ENCODE measurements at regions of chr11 and their contacts with region 1.

Region 1: DNA sequence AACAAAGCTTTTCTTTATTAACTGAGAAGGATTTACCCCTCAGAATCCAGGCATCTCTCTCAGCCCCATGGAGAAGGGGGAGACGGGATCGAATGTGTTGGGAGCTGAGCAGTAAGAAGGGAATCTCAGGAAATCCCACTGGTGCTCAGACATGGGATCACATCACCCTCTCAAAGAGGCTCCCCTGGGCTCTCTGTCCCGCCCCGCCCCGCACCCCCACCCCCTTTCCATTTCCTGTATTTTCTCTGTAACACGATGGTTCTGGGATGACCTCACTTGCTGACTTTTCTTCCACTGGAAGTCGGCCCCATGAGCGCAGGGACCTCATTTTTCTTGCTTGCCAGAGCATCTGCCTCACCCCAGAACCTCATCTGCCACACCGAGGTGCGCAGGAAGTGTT is 100.0 kb downstream of the RPS6KA4 start:
- DNase-seq: no peak
- H3K4me3 ChIP-seq: no peak overlapping the region
- H3K27ac ChIP-seq: no peak overlapping the region
- H3K4me1 ChIP-seq: no peaks in the 10 kb centered on the region
- H3K27me3 ChIP-seq: peaks cover 3% of the 10 kb centered on the region
- CTCF ChIP-seq: no peak

Region 2: DNA sequence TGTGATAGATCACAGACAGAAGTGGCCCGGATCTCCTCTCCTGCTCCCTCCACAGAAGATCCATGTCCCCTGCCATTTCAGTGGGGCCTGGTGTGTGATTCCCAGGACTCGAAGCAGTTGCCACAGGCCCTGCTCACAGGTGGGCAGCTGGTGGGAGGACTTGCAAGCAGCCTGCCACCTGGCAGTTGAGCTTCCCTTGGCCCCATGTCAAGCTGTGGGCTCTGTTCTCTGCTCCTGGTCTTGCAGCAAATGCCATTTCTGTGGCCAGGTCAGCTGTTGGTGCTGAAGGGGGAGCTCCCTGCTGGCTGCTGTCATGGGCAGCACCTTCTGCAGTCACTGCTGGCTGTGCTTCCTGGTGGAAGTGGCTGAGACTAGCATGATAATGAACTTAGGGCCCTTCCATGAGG is 72.9 kb after region 1 on chr11:
- dilution Hi-C with region 1: loop called (anchors 5 kb)
- DNase-seq: no peak
- H3K4me3 ChIP-seq: no peak overlapping the region
- H3K27ac ChIP-seq: no peak overlapping the region
- H3K4me1 ChIP-seq: no peaks in the 10 kb centered on the region
- H3K27me3 ChIP-seq: peaks cover 35% of the 10 kb centered on the region
- CTCF ChIP-seq: no peak

Region 3: DNA sequence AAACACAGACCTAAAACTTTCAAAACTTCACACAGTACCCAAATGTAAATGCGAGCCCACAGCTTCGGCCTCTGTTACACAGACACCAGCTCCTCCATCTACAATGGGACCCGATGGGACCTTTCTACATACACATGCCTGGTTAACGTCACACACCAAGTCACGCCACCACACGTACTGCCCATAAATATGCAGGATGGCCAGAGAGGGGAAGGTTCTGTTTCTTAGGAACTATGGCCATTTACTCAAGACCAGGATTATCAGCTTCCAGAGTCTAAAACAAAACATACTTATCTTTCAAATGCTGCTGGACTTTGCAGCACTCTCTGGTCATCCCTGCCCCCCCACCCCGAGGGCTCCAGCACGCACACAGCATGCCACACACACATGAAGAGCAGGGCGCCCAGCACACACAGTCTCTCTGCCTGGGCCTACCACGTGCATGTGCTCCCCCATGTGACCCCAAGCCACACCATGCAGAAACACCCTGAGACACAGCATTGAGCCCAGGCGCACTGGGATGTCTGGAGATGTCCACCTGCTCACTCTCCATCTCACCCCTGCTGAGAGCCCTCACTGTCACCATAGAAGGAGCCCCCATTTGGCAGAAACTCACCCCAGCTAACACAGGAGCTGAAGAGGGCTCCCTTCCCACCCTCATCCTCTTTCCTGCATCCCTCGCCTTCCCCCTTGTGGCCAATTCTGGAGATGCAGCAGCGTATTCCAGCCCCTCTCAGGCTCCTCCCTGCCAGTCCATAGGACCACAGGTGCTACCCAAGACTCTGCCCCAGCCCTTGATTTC is 193.8 kb after region 1 on chr11:
- dilution Hi-C with region 1: no loop called
- DNase-seq: no peak
- H3K4me3 ChIP-seq: no peak overlapping the region
- H3K27ac ChIP-seq: no peak overlapping the region
- H3K4me1 ChIP-seq: no peaks in the 10 kb centered on the region
- H3K27me3 ChIP-seq: peaks cover 9% of the 10 kb centered on the region
- CTCF ChIP-seq: peak; percentile 93 to 96 (median 95)

Measured in keratinocyte (primary cell).